Esophagus muscularis mucosa (tissue), 4 donors: ENCODE measurements at regions of chr2 and their contacts with region 1.

Region 1: GRCh38 chr2:27016801-27017325 is 15.9 kb upstream of the TMEM214 start:
- DNase-seq: no peak
- H3K4me3 ChIP-seq: no peak overlapping the region
- H3K27ac ChIP-seq: no peak overlapping the region
- H3K4me1 ChIP-seq: peaks cover 24 to 40% (median 33%) of the 10 kb centered on the region in 4 donors
- H3K27me3 ChIP-seq: no peaks in the 10 kb centered on the region
- CTCF ChIP-seq: peak; percentile 63 to 73 (median 70)
- EP300 ChIP-seq: no peak
- POLR2A ChIP-seq: no peak

Region 2: GRCh38 chr2:26959331-26959730 is 57.5 kb before region 1 on chr2:
- intact Hi-C with region 1: loop called (anchors 1 kb)
- DNase-seq: no peak
- H3K4me3 ChIP-seq: no peak overlapping the region
- H3K27ac ChIP-seq: no peak overlapping the region
- H3K4me1 ChIP-seq: peaks cover 0 to 7% (median 7%) of the 10 kb centered on the region in 4 donors
- H3K27me3 ChIP-seq: peaks cover 0 to 55% (median 0%) of the 10 kb centered on the region in 4 donors
- CTCF ChIP-seq: no peak
- EP300 ChIP-seq: no peak
- POLR2A ChIP-seq: no peak